GM23248 (cell line): ENCODE measurements at regions of chr5 and their contacts with region 1.

Region 1: DNA sequence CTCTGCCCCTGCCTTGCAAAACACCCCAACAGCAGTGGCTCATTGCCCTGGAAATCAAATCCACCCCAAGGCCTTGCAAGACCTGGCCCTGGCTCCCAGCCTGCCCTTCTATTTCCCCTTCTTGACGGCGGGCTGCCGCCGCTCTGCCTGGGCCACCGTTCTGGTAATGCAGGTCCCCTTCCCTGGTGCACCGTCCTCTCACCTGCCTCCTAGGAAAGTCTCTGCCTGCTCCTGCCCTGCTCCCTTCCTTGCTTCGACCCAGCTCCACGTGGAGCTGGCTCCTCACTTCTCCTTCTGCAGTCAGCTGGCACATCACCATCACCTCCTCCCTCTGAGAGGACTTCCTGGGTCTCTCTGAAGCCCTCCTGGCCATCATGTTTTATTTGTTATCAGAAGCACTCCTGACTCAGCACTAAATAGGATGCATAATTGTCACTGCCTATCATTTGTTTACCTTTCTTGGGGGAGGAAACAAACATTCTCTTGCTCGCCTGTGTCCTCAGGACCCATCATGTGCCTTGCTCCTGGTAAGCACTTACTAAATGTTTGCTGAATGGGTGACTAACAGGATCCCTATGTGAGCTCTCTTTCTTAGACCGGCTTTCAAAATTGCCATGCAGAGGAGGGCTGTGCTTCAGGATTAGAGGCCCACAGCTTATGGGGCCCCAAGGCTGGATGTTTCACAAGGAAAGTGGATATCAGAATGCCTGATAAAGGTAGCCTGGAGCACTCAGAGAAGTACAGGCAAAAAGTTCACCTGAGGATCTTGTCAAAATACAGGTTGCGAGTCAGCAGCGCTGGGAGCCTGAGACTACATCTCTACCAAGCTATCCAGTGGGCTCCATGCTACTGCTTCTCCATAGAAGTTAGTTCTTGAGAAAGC is 19.6 kb upstream of the C5orf47 start:
- DNase-seq: peak; percentile 72
- H3K4me3 ChIP-seq: no peak overlapping the region
- H3K27ac ChIP-seq: no peak overlapping the region
- H3K4me1 ChIP-seq: no peaks in the 10 kb centered on the region
- H3K27me3 ChIP-seq: no peaks in the 10 kb centered on the region

Region 2: DNA sequence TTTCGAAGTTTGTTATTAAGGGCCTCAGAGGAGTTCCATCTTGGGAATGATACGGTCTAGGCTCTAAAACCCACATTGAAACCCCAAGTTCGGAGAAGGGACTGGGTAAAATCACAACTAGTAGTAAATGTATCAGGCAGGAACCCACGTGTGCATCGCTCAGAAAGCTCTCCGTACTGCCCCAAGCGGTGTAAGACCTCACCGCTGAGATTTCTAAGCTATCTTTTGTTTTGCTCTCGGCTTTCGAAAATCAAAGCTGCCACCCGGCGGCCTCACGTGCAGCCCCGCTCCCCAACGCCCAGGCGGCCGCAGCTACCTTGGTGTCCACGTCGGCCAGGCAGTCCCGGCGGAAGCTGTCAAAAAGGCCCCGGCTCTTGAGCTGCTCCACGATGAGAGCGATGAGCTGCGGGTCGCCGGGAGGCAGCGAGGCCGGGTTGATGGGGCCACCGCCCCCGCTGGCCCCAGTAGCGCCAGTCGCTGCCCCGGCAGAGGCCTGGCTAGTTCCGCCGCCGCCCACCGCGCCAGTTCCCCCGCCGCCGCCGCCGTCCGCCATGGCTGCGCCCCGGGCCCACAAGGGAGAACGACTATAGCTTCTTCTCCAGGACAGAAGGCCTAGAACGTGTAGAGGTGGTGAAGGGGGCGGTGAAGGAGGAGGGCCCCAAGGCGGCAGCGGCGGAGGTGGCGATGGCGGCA is 353.4 kb before region 1 on chr5:
- in situ Hi-C with region 1: loop called (anchors 5 kb)
- DNase-seq: peak; percentile 94
- H3K4me3 ChIP-seq: peak overlapping the region; percentile 82
- H3K27ac ChIP-seq: peak overlapping the region; percentile 93
- H3K4me1 ChIP-seq: peaks cover 34% of the 10 kb centered on the region
- H3K27me3 ChIP-seq: no peaks in the 10 kb centered on the region

Region 3: DNA sequence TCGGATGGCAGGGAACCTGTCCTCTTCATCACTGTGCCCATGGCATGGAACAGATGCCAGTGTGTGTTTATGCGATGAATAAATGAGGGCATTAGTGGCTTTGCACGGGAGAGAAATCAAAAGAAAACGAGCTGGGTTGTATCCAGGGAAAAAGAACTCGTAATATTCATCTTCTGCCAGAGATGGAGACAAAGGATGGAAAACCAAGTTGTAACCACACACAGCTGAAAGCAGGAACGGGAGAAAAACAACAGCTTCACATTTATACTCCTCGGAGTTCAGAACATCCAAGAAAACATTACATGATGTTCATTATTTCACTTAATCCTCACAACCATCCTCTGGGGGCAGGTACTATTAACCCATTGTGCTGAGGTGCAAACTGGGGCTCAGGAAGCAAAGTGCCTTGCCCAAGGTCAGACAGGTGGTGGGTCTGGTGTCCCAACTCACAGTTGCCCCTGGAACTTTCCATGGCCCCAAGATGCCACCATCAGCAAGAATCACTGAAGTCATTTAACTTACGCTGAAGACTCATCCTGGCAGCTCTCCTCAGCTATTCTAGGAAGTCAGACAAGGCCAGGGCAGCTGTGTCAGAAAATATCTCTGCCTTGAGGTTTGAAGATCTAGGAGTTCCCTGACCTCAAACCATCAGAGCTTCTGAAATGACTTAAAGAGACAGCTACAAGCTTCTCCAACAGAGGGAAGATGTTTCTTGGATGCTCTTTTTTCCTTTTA is 326.5 kb after region 1 on chr5:
- in situ Hi-C with region 1: no loop called
- DNase-seq: no peak
- H3K4me3 ChIP-seq: no peak overlapping the region
- H3K27ac ChIP-seq: no peak overlapping the region
- H3K4me1 ChIP-seq: no peaks in the 10 kb centered on the region
- H3K27me3 ChIP-seq: no peaks in the 10 kb centered on the region

Region 4: GRCh38 chr5:174418928-174419796 is 449.8 kb after region 1 on chr5:
- in situ Hi-C with region 1: no loop called
- DNase-seq: peak; percentile 89
- H3K4me3 ChIP-seq: no peak overlapping the region
- H3K27ac ChIP-seq: no peak overlapping the region
- H3K4me1 ChIP-seq: no peaks in the 10 kb centered on the region
- H3K27me3 ChIP-seq: peaks cover 30% of the 10 kb centered on the region